Left ventricle myocardium superior (tissue), 1 donor: ENCODE measurements at regions of chr15 and their contacts with region 1.

Region 1: DNA sequence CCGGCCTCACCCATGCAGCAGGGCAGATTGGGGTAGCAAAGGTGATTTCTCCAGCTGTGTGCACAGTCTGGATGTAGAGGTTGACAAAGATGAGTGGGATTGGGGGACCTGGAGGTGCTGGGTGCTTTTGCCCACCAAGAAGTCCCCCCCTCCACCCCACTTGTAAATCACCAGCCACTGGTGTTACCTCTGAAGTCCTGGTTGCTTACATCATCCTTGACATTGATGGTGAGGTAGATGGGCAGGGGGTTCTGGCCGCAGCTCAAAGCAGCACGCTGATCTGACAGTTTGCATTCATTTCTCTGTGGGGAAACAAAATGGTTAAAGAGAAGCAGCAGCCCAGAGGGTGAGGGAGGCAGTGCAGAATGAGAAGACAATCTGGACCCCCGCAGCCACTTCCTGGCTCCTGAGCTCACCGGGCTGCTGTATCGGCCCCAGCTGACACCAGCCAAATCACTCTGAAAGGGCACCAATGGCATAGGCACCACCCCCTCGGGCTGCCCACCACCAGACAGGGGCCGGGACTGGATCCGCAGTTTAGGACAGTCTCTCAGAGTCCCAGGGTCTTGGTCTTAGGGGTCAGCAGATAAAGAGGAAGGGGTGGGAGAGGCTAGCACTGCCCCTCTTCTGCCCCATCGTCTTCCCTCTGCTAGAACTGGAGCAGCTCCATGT is 17.7 kb upstream of the EHD4 start:
- DNase-seq: no peak
- ATAC-seq: no peak

Region 2: GRCh38 chr15:42056934-42057779 is 67.1 kb after region 1 on chr15:
- intact Hi-C with region 1: loop called (anchors 5 kb)
- DNase-seq: peak; percentile 88
- ATAC-seq: peak; percentile 95

Region 3: DNA sequence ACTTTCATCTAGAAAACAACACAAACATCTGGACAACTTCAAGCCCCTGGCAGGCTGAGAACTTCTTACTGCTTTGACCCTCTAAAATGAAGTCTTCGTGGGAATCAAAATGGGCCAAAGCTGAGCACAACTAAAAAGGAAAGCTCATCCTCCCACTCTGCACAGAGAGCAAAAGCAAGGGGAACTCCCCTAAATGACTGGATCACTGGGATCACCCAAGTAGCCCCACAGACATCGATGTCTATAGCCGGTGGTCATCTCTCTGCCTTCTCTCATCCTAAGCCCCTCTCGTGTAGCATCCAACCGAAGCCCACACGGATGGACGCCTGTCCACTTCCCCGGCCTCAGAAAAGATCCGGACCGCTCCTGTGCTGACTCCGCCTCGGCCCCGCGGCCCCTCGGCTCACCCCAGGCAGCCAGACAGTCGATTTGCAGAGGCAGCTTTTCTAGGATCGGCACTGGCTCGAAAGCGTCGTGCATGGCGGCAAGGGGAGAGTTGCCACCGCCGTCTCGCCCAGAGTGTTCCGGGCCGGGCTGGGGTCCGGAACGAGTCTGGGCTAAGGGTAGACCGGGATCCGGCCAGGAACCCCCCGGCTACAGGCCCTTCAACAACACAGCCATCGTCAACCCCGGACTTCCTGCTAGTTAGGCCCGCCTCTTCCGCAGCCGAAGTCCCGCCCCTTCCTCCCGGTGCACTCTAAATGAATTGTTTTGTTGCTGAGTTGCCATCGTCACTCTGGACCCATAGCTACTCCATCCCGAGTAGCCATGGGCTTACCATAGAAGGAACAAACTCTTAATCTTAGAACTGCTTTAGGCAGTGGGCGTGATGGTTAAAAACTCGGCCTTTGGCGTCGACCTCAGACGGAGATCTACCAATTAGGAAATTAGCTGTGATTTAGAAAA is 217.9 kb after region 1 on chr15 and contains the start of gene VPS39:
- intact Hi-C with region 1: no loop called
- DNase-seq: peak; percentile 88
- ATAC-seq: peak; percentile 98
- total RNA-seq, gene VPS39: 45.3 TPM